ENCODE measurements at regions of chr7 and their contacts with region 1.

Region 1: DNA sequence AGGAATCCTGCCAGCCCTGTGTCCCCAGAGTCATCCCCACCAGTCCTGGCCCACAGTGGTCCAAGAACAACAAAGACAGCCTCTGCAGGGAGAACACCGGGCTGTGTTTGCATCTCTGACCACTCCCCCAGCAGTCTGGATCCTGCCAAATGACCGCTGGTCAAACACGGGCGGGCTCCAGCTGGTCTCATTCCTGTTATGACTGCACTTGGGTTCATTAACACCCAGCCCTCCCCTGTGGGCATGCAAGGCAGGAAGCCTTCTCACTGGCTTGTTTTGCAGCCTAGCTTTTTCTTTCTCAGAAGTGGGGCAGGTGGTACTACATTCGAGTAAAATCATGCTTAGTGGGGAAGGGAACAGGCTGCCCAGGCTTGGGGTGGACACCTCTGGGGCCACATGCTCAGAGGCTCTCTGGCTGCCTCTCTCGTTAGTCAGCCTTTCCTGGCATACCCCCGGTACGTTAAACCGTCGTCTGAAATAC is 190.0 kb downstream of the PLXNA4 start:
- DNase-seq: peak; percentile 81 to 84
- ATAC-seq: peak; percentile 87
- H3K4me3 ChIP-seq: no peak overlapping the region
- H3K27ac ChIP-seq: peak overlapping the region; percentile 42 to 57
- H3K4me1 ChIP-seq: peaks cover 0 to 3% of the 10 kb centered on the region in 2 donors
- H3K27me3 ChIP-seq: no peaks in the 10 kb centered on the region

Region 2: GRCh38 chr7:132351954-132352499 is 34.2 kb before region 1 on chr7:
- intact Hi-C with region 1: loop called in 1 of 2 experiments (anchors 5 kb)
- DNase-seq: peak; percentile 82 to 83
- ATAC-seq: peak; percentile 44
- H3K4me3 ChIP-seq: peak overlapping the region in 1 of 2 donors; percentile 8
- H3K27ac ChIP-seq: peak overlapping the region; percentile 50 to 84
- H3K4me1 ChIP-seq: no peaks in the 10 kb centered on the region
- H3K27me3 ChIP-seq: no peaks in the 10 kb centered on the region

Region 3: DNA sequence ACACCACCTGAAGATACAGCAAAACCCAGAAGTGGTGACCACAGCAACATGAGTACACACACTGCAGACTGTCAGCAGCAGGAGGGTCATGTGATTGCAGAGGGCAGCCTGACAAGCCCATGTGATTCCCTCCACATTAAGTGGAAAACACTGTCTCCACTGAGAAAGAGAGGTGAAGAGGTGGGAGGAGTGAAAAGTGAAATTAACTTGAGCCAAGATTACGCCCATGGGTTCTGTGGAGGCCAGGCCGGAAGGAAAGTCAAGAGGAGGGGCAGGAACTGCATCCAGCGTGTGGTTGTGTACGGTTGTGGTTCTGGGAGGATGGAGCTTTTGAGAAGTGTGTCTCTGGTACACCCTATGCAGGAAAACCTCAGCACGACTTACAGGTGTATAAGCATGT is 51.5 kb after region 1 on chr7:
- intact Hi-C with region 1: no loop called
- DNase-seq: no peak
- ATAC-seq: no peak
- H3K4me3 ChIP-seq: no peak overlapping the region
- H3K27ac ChIP-seq: no peak overlapping the region
- H3K4me1 ChIP-seq: no peaks in the 10 kb centered on the region
- H3K27me3 ChIP-seq: no peaks in the 10 kb centered on the region

Region 4: GRCh38 chr7:132488634-132489302 is 102.5 kb after region 1 on chr7:
- intact Hi-C with region 1: loop called in 1 of 2 experiments (anchors 5 kb)
- DNase-seq: peak in 1 of 2 donors; percentile 44
- ATAC-seq: no peak
- H3K4me3 ChIP-seq: no peak overlapping the region
- H3K27ac ChIP-seq: no peak overlapping the region
- H3K4me1 ChIP-seq: no peaks in the 10 kb centered on the region
- H3K27me3 ChIP-seq: no peaks in the 10 kb centered on the region

Measured in aorta (tissue), 5 donors.